Colonic mucosa (tissue), 4 donors: ENCODE measurements at regions of chr12 and their contacts with region 1.

Region 1: DNA sequence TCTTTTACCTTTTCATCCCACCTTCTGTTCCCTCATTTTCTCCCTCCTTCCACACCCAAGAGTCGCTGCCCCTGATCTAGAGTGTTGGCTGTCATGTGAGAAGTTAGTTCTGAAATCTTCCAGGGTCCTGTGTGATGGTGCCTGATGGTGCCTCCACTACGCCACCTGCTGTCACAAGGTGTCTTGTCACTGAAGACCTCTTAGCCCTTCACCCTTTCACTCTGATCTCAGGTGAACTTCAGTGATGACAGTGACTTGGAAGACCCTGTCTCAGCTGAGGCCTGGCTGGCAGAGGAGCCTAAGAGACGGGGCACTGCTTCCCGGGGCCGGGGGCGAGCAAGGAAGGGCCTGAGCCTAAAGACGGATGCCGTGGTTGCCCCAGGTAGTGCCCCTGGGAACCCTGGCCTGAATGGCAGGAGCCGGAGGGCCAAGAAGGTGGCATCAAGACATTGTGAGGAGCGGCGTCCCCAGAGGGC is 7.6 kb upstream of the PFDN5 start:
- DNase-seq: peak; percentile 74
- H3K4me3 ChIP-seq: no peak overlapping the region
- H3K27ac ChIP-seq: no peak overlapping the region
- H3K4me1 ChIP-seq: no peaks in the 10 kb centered on the region
- H3K27me3 ChIP-seq: no peaks in the 10 kb centered on the region
- CTCF ChIP-seq: peak; percentile 73

Region 2: DNA sequence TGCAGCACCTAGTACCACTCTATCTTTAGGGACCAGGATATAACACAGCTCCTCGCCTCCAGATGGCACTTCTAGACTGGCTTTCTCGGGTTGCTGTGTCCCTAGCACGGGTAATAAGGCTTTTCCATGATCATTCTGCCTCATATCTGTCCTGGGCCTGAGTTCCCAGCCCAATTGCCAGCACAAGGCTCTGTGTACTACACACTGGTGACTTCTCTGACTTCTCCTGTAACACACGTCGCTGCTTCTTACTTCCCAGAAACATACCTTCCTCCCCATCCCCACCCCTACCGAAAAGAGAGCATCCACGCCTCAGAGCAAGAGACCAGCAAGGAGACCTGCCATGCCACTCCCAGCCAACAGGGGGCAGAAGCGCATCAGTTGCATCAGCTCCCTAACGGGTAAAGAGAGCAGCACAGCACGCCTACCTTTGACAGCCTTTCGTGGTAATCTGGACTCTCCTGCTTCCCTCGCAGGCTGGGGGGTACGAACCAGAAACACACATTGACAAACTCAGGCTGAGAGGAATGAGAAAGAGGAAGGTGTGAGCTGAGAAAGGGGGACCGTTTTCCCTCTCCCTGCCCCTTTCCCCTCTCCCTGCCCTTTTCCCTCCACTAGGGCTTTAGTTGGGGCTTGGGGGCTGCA is 128.5 kb before region 1 on chr12:
- intact Hi-C with region 1: loop called (anchors 5 kb)
- DNase-seq: peak; percentile 91
- H3K4me3 ChIP-seq: no peak overlapping the region
- H3K27ac ChIP-seq: no peak overlapping the region
- H3K4me1 ChIP-seq: no peaks in the 10 kb centered on the region
- H3K27me3 ChIP-seq: no peaks in the 10 kb centered on the region
- CTCF ChIP-seq: peak; percentile 95

Region 3: GRCh38 chr12:53214687-53215455 is 72.9 kb before region 1 on chr12:
- intact Hi-C with region 1: loop called (anchors 2 kb)
- DNase-seq: no peak
- H3K4me3 ChIP-seq: no peak overlapping the region
- H3K27ac ChIP-seq: no peak overlapping the region
- H3K4me1 ChIP-seq: peaks cover 16% of the 10 kb centered on the region
- H3K27me3 ChIP-seq: no peaks in the 10 kb centered on the region
- CTCF ChIP-seq: no peak